ENCODE measurements at regions of chr11 and their contacts with region 1.

Region 1: GRCh38 chr11:119095066-119095880 is 6.4 kb downstream of the DPAGT1 start:
- DNase-seq: peak; percentile 96 to 100 (median 100)
- ATAC-seq: peak; percentile 93
- H3K4me3 ChIP-seq: peak overlapping the region; percentile 94
- H3K4me3 Mint-ChIP-seq: peak overlapping the region; percentile 90 to 97 (median 93)
- H3K27ac ChIP-seq: peak overlapping the region; percentile 75
- H3K27ac Mint-ChIP-seq: peak overlapping the region; percentile 82 to 96 (median 88)
- H3K4me1 ChIP-seq: peaks cover 11 to 23% of the 10 kb centered on the region in 2 donors
- H3K4me1 Mint-ChIP-seq: peaks cover 20 to 67% (median 37%) of the 10 kb centered on the region in 7 donors
- H3K27me3 ChIP-seq: no peaks in the 10 kb centered on the region
- H3K27me3 Mint-ChIP-seq: peaks cover 0 to 3% (median 0%) of the 10 kb centered on the region in 5 donors

Region 2: DNA sequence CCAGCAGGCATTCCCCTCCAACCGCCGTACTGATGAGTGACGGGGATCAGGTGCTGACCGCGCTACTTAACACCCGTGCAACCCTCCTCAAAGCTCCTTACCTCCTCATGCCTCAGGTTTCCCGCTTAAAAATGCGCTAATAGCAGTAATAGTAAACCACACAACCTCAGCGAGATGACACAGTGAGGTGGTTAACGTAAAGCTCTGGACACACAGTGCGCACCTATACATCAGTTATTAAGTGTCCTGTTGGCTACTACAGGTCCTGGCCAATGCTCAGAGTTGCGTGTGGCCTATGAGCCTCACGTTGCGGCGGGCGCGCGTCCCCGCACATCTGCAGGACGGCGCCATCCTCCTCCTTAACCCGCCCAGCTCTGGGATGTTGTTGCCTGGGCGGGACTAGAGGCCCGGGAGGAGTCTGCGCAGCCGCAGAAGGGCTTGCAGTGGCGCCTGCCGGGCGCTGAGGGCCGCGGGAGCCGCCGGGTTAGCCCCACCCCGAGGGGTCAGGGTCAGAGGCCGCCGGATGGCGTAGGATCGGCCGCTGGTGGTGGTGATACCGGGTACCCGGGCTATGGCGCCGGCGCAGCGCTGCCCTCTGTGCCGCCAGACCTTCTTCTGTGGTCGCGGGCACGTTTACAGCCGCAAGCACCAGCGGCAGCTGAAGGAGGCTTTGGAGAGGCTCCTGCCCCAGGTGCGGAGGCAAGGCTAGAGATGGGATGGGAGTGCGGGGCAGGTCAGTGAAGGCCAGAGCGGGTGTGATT is 97.5 kb before region 1 on chr11 and contains the start of gene CENATAC:
- CTCF ChIA-PET with region 1: no interaction called
- POLR2A ChIA-PET with region 1: interaction called, 7 read pairs
- intact Hi-C with region 1: loop called (anchors 1 to 5 kb)
- DNase-seq: peak; percentile 91 to 98 (median 94)
- ATAC-seq: peak; percentile 98
- H3K4me3 ChIP-seq: peak within 1 kb of the TSS; percentile 91
- H3K4me3 Mint-ChIP-seq: peak within 1 kb of the TSS; percentile 87 to 99 (median 94)
- H3K27ac ChIP-seq: peak within 1 kb of the TSS; percentile 85
- H3K27ac Mint-ChIP-seq: peak within 1 kb of the TSS; percentile 87 to 98 (median 92)
- H3K4me1 ChIP-seq: peaks cover 6 to 16% of the 10 kb centered on the region in 2 donors
- H3K4me1 Mint-ChIP-seq: peaks cover 26 to 45% (median 37%) of the 10 kb centered on the region in 7 donors
- H3K27me3 ChIP-seq: no peaks in the 10 kb centered on the region
- H3K27me3 Mint-ChIP-seq: no peaks in the 10 kb centered on the region
- total RNA-seq, gene CENATAC: 53.5 to 136 (median 109) TPM

Region 3: DNA sequence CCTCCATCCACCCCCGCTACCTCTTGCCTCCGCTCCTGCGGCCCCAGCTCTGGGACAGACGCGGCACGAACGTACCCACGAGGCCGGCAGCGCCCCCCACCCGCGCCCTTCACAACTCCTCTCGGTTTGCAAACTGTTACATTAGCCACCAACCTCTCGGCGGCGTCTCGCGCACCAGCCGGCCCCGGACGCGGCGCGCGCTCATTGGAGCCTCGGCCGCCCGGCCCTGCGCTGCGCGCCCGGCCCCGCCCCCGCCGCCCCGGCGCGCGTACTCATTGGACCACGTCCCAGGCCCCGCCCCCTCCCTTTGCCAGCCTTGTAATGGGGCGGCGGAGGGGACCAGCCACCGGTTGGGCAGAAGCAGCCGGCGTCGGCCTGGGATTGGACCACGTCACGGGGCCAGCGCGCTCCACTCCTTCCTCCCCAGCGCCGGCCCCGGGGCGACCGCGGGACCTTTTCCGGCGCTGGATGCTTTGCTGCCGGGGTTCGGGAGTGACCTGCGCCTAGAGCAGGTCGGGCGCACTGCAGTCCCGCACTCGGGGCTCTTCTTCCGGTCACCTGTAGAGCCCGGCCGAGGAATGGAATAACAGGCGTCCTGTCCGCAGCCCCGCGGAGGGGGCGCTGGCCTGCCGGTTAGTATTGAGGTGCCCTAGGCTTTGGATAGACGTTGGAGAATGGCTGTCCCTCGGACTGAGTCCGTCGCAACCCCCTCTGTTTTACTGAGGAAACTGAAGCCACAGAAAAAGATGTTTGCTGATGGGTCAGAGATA is 38.1 kb before region 1 on chr11 and contains the start of gene HYOU1:
- CTCF ChIA-PET with region 1: no interaction called
- POLR2A ChIA-PET with region 1: interaction called, 7 read pairs
- intact Hi-C with region 1: loop called (anchors 1 kb)
- DNase-seq: peak; percentile 97 to 98 (median 98)
- ATAC-seq: peak; percentile 98
- H3K4me3 ChIP-seq: peak within 1 kb of the TSS; percentile 73
- H3K4me3 Mint-ChIP-seq: peak within 1 kb of the TSS; percentile 90 to 99 (median 95)
- H3K27ac ChIP-seq: peak within 1 kb of the TSS; percentile 96
- H3K27ac Mint-ChIP-seq: peak within 1 kb of the TSS; percentile 86 to 99 (median 95)
- H3K4me1 ChIP-seq: peaks cover 18 to 20% of the 10 kb centered on the region in 2 donors
- H3K4me1 Mint-ChIP-seq: peaks cover 22 to 44% (median 35%) of the 10 kb centered on the region in 7 donors
- H3K27me3 ChIP-seq: no peaks in the 10 kb centered on the region
- H3K27me3 Mint-ChIP-seq: no peaks in the 10 kb centered on the region
- total RNA-seq, gene HYOU1: 77.8 to 198 (median 110) TPM

Region 4: GRCh38 chr11:119121008-119121810 is 25.9 kb after region 1 on chr11 and contains the start of gene HINFP:
- CTCF ChIA-PET with region 1: interaction called, 6 read pairs
- POLR2A ChIA-PET with region 1: interaction called, 435 read pairs
- intact Hi-C with region 1: loop called (anchors 1 kb)
- DNase-seq: peak; percentile 92 to 100 (median 98)
- ATAC-seq: peak; percentile 99
- H3K4me3 ChIP-seq: peak within 1 kb of the TSS; percentile 71
- H3K4me3 Mint-ChIP-seq: peak within 1 kb of the TSS; percentile 86 to 98 (median 94)
- H3K27ac ChIP-seq: peak within 1 kb of the TSS; percentile 85
- H3K27ac Mint-ChIP-seq: peak within 1 kb of the TSS; percentile 78 to 98 (median 95)
- H3K4me1 ChIP-seq: peaks cover 17 to 23% of the 10 kb centered on the region in 2 donors
- H3K4me1 Mint-ChIP-seq: peaks cover 34 to 58% (median 50%) of the 10 kb centered on the region in 7 donors
- H3K27me3 ChIP-seq: no peaks in the 10 kb centered on the region
- H3K27me3 Mint-ChIP-seq: no peaks in the 10 kb centered on the region
- total RNA-seq, gene HINFP: 30.7 to 79.7 (median 42.7) TPM

Region 5: GRCh38 chr11:119196833-119197483 is 101.7 kb after region 1 on chr11:
- CTCF ChIA-PET with region 1: interaction called, 3 read pairs
- POLR2A ChIA-PET with region 1: interaction called, 14 read pairs
- intact Hi-C with region 1: loop called in 1 of 2 experiments (anchors 1 kb)
- DNase-seq: peak in 8 of 9 donors; percentile 51 to 84 (median 78)
- ATAC-seq: peak; percentile 98
- H3K4me3 ChIP-seq: no peak overlapping the region
- H3K4me3 Mint-ChIP-seq: no peak overlapping the region
- H3K27ac ChIP-seq: no peak overlapping the region
- H3K27ac Mint-ChIP-seq: no peak overlapping the region
- H3K4me1 ChIP-seq: no peaks in the 10 kb centered on the region
- H3K4me1 Mint-ChIP-seq: peaks cover 0 to 10% (median 5%) of the 10 kb centered on the region in 7 donors
- H3K27me3 ChIP-seq: no peaks in the 10 kb centered on the region
- H3K27me3 Mint-ChIP-seq: peaks cover 0 to 5% (median 0%) of the 10 kb centered on the region in 5 donors

Region 6: GRCh38 chr11:119999220-119999619 is 903.9 kb after region 1 on chr11:
- CTCF ChIA-PET with region 1: no interaction called
- POLR2A ChIA-PET with region 1: no interaction called
- intact Hi-C with region 1: no loop called
- DNase-seq: no peak
- ATAC-seq: no peak
- H3K4me3 ChIP-seq: no peak overlapping the region
- H3K4me3 Mint-ChIP-seq: no peak overlapping the region
- H3K27ac ChIP-seq: no peak overlapping the region
- H3K27ac Mint-ChIP-seq: no peak overlapping the region
- H3K4me1 ChIP-seq: no peaks in the 10 kb centered on the region
- H3K4me1 Mint-ChIP-seq: peaks cover 0 to 3% (median 0%) of the 10 kb centered on the region in 7 donors
- H3K27me3 ChIP-seq: no peaks in the 10 kb centered on the region
- H3K27me3 Mint-ChIP-seq: peaks cover 18 to 37% (median 24%) of the 10 kb centered on the region in 5 donors